Heart right ventricle (tissue), 16 donors: ENCODE measurements at regions of chr3 and their contacts with region 1.

Region 1: GRCh38 chr3:159804726-159805410 is 183.8 kb upstream of the IL12A start:
- DNase-seq: peak in 1 of 2 donors; percentile 82
- ATAC-seq: peak; percentile 88 to 94 (median 92)
- H3K4me3 ChIP-seq: peak overlapping the region in 1 of 10 donors; percentile 4
- H3K27ac ChIP-seq: peak overlapping the region in 8 of 10 donors; percentile 42 to 74 (median 64)
- H3K4me1 ChIP-seq: peaks cover 8 to 79% (median 57%) of the 10 kb centered on the region in 9 donors
- H3K27me3 ChIP-seq: no peaks in the 10 kb centered on the region
- CTCF ChIP-seq: peak; percentile 80 to 94 (median 86)

Region 2: GRCh38 chr3:159266779-159267178 is 538.1 kb before region 1 on chr3:
- intact Hi-C with region 1: loop called in 9 of 10 experiments (anchors 2 to 10 kb)
- DNase-seq: no peak
- ATAC-seq: no peak
- H3K4me3 ChIP-seq: no peak overlapping the region
- H3K27ac ChIP-seq: no peak overlapping the region
- H3K4me1 ChIP-seq: no peaks in the 10 kb centered on the region
- H3K27me3 ChIP-seq: peaks cover 0 to 3% (median 0%) of the 10 kb centered on the region in 7 donors
- CTCF ChIP-seq: peak in 6 of 9 donors; percentile 18 to 37 (median 29)

Region 3: DNA sequence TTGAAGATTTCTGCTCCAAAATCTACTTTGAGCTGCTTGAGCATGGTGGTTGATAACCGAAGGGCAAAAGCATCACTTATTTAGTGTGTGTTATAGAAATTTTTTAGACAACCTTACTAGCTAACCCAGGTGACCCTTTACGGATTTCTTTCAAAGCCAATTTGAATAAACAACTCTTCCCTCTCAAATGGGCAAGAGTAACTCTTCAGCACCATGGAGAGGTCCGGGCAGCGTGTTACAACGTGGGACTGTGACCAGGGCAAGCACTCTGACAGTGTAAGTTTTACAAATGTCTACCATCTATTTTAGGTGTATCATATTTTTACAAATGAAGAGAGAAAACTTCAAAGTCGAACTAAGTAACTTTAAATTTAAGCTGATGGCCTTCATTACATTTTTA is 531.3 kb before region 1 on chr3:
- intact Hi-C with region 1: loop called in 5 of 10 experiments (anchors 5 to 10 kb)
- DNase-seq: peak; percentile 18 to 60
- ATAC-seq: peak in 2 of 8 donors; percentile 27 to 72
- H3K4me3 ChIP-seq: no peak overlapping the region
- H3K27ac ChIP-seq: no peak overlapping the region
- H3K4me1 ChIP-seq: no peaks in the 10 kb centered on the region
- H3K27me3 ChIP-seq: no peaks in the 10 kb centered on the region
- CTCF ChIP-seq: no peak

Region 4: GRCh38 chr3:159322322-159322939 is 482.4 kb before region 1 on chr3:
- intact Hi-C with region 1: loop called in 5 of 10 experiments (anchors 2 to 10 kb)
- DNase-seq: peak in 1 of 2 donors; percentile 40
- ATAC-seq: peak in 2 of 8 donors; percentile 44 to 68
- H3K4me3 ChIP-seq: no peak overlapping the region
- H3K27ac ChIP-seq: no peak overlapping the region
- H3K4me1 ChIP-seq: no peaks in the 10 kb centered on the region
- H3K27me3 ChIP-seq: no peaks in the 10 kb centered on the region
- CTCF ChIP-seq: peak; percentile 26 to 76 (median 64)

Region 5: GRCh38 chr3:160196511-160197104 is 391.7 kb after region 1 on chr3:
- intact Hi-C with region 1: no loop called
- DNase-seq: peak; percentile 18 to 49
- ATAC-seq: peak; percentile 51 to 92 (median 72)
- H3K4me3 ChIP-seq: no peak overlapping the region
- H3K27ac ChIP-seq: peak overlapping the region in 1 of 10 donors; percentile 20
- H3K4me1 ChIP-seq: no peaks in the 10 kb centered on the region
- H3K27me3 ChIP-seq: peaks cover 0 to 18% (median 0%) of the 10 kb centered on the region in 7 donors
- CTCF ChIP-seq: no peak